Activated naive CD4-positive, alpha-beta T cell treated with anti-CD3 and anti-CD28 coated beads for 36 hours (primary cell): ENCODE measurements at regions of chr19 and their contacts with region 1.

Region 1: GRCh38 chr19:29837448-29837981 is 25.7 kb downstream of the CCNE1 start:
- DNase-seq: peak; percentile 79
- H3K4me3 Mint-ChIP-seq: peak overlapping the region; percentile 58
- H3K27ac Mint-ChIP-seq: peak overlapping the region; percentile 97
- H3K4me1 Mint-ChIP-seq: peaks cover 57% of the 10 kb centered on the region
- H3K27me3 Mint-ChIP-seq: no peaks in the 10 kb centered on the region

Region 2: GRCh38 chr19:29212648-29213573 is 624.6 kb before region 1 on chr19 and contains the start of gene UQCRFS1:
- CTCF ChIA-PET with region 1: no interaction called
- intact Hi-C with region 1: loop called (anchors 10 kb)
- DNase-seq: peak; percentile 97
- H3K4me3 Mint-ChIP-seq: peak within 1 kb of the TSS; percentile 96
- H3K27ac Mint-ChIP-seq: peak within 1 kb of the TSS; percentile 96
- H3K4me1 Mint-ChIP-seq: peaks cover 40% of the 10 kb centered on the region
- H3K27me3 Mint-ChIP-seq: no peaks in the 10 kb centered on the region
- total RNA-seq, gene UQCRFS1: 46.8 to 47.6 TPM

Region 3: DNA sequence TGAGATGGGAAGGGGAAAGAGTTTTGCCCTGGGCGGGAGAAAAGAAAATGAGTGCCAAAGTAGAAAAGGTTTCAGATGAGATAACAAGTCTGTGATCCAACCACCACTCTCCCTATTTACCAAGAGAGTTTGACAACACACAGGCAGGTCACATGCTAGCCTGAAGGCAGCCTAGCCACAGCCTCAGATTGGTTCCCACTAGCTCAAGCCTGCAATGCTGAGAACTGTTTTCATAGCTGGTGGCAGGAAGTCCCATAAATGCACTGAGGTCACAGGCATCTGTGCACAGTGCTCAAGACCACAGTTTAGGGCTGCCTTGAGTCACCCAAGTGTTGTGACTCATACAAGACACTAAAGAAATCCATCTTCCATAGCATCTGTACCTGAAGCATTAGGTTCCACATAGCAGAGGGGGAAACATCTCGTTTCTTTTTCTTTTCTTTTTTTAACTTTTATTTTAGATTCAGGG is 250.0 kb before region 1 on chr19:
- CTCF ChIA-PET with region 1: no interaction called
- intact Hi-C with region 1: loop called (anchors 10 kb)
- DNase-seq: peak; percentile 84
- H3K4me3 Mint-ChIP-seq: no peak overlapping the region
- H3K27ac Mint-ChIP-seq: peak overlapping the region; percentile 76
- H3K4me1 Mint-ChIP-seq: peaks cover 18% of the 10 kb centered on the region
- H3K27me3 Mint-ChIP-seq: peaks cover 39% of the 10 kb centered on the region

Region 4: GRCh38 chr19:29671393-29672160 is 165.9 kb before region 1 on chr19:
- CTCF ChIA-PET with region 1: interaction called, 4 read pairs
- intact Hi-C with region 1: loop called (anchors 1 kb)
- DNase-seq: peak; percentile 96
- H3K4me3 Mint-ChIP-seq: peak overlapping the region; percentile 69
- H3K27ac Mint-ChIP-seq: peak overlapping the region; percentile 96
- H3K4me1 Mint-ChIP-seq: peaks cover 91% of the 10 kb centered on the region
- H3K27me3 Mint-ChIP-seq: no peaks in the 10 kb centered on the region

Region 5: GRCh38 chr19:29804493-29804892 is 33.0 kb before region 1 on chr19:
- CTCF ChIA-PET with region 1: no interaction called
- intact Hi-C with region 1: loop called (anchors 1 kb)
- DNase-seq: peak; percentile 55
- H3K4me3 Mint-ChIP-seq: no peak overlapping the region
- H3K27ac Mint-ChIP-seq: no peak overlapping the region
- H3K4me1 Mint-ChIP-seq: peaks cover 7% of the 10 kb centered on the region
- H3K27me3 Mint-ChIP-seq: no peaks in the 10 kb centered on the region

Region 6: GRCh38 chr19:29811125-29812079 is 26.1 kb before region 1 on chr19 and contains the start of gene CCNE1:
- CTCF ChIA-PET with region 1: interaction called, 4 read pairs
- intact Hi-C with region 1: loop called (anchors 2 kb)
- DNase-seq: peak; percentile 97
- H3K4me3 Mint-ChIP-seq: peak within 1 kb of the TSS; percentile 84
- H3K27ac Mint-ChIP-seq: peak within 1 kb of the TSS; percentile 88
- H3K4me1 Mint-ChIP-seq: peaks cover 11% of the 10 kb centered on the region
- H3K27me3 Mint-ChIP-seq: no peaks in the 10 kb centered on the region
- total RNA-seq, gene CCNE1: 31.2 to 34.1 TPM

Region 7: GRCh38 chr19:29966588-29967249 is 129.2 kb after region 1 on chr19:
- CTCF ChIA-PET with region 1: no interaction called
- intact Hi-C with region 1: no loop called
- DNase-seq: no peak
- H3K4me3 Mint-ChIP-seq: no peak overlapping the region
- H3K27ac Mint-ChIP-seq: no peak overlapping the region
- H3K4me1 Mint-ChIP-seq: peaks cover 86% of the 10 kb centered on the region
- H3K27me3 Mint-ChIP-seq: no peaks in the 10 kb centered on the region

Region 8: DNA sequence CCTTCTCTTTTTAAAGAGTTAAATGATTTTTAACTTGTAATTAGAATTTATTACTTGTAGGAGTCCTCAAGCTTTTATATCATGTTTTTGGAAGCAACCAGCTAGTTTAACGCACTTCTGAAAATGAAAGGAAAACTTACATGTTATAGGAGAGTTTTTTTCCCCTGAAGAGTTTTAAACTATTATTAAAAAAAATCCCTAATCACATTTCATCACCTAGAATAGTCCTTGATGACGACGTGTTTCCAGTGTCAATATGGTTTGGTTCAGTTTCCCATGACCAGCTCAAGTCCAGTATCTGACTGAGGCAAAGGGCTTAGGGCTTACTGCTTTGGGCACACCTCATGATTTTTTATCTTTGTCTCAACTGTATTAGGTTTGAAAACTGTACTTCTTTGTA is 140.6 kb after region 1 on chr19:
- CTCF ChIA-PET with region 1: no interaction called
- intact Hi-C with region 1: no loop called
- DNase-seq: peak; percentile 11
- H3K4me3 Mint-ChIP-seq: peak overlapping the region; percentile 12
- H3K27ac Mint-ChIP-seq: no peak overlapping the region
- H3K4me1 Mint-ChIP-seq: peaks cover 53% of the 10 kb centered on the region
- H3K27me3 Mint-ChIP-seq: no peaks in the 10 kb centered on the region

Region 9: GRCh38 chr19:30011051-30011578 is 173.6 kb after region 1 on chr19:
- CTCF ChIA-PET with region 1: no interaction called
- intact Hi-C with region 1: no loop called
- DNase-seq: no peak
- H3K4me3 Mint-ChIP-seq: no peak overlapping the region
- H3K27ac Mint-ChIP-seq: no peak overlapping the region
- H3K4me1 Mint-ChIP-seq: peaks cover 10% of the 10 kb centered on the region
- H3K27me3 Mint-ChIP-seq: no peaks in the 10 kb centered on the region

Region 10: GRCh38 chr19:31214086-31214485 is 1376.6 kb after region 1 on chr19:
- CTCF ChIA-PET with region 1: no interaction called
- intact Hi-C with region 1: loop called (anchors 2 kb)
- DNase-seq: peak; percentile 97
- H3K4me3 Mint-ChIP-seq: peak overlapping the region; percentile 60
- H3K27ac Mint-ChIP-seq: peak overlapping the region; percentile 99
- H3K4me1 Mint-ChIP-seq: peaks cover 40% of the 10 kb centered on the region
- H3K27me3 Mint-ChIP-seq: no peaks in the 10 kb centered on the region